A549 (cell line): ENCODE measurements at regions of chr3 and their contacts with region 1.

Region 1: DNA sequence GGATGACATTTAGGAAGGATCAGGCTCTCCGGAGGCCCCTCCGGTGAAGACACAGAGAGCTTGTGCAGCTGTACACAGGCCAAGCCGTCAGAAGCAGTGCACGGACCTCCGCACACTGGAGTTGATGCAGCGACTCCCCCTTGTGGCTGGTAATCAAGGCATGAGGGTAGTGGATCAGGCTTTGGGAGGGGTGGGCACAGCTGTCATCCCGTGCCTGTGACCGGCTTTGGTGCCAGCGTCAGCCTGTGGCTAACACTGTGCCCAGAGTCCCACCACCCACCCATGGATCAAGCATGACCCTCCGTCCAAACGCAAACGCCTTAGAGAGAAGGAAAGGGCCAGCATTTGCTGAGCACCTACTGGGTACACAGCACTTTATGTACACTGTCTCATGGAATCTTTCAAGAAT is 8.2 kb upstream of the GRIP2 start:
- DNase-seq: peak; percentile 67 to 76
- ATAC-seq: peak; percentile 86 to 96
- H3K4me3 ChIP-seq: no peak overlapping the region
- H3K27ac ChIP-seq: peak overlapping the region in 1 of 2 experiments; percentile 28; a peak in 1 of 6 replicates
- H3K4me1 ChIP-seq: peaks cover 16% of the 10 kb centered on the region
- CTCF ChIP-seq: peak; percentile 78
- EP300 ChIP-seq: no peak
- POLR2A ChIP-seq: no peak
- RAD21 ChIP-seq: peak; percentile 73 to 82

Region 2: GRCh38 chr3:14532691-14533456 is 15.5 kb before region 1 on chr3:
- CTCF ChIA-PET with region 1: interaction called, 49 read pairs
- POLR2A ChIA-PET with region 1: no interaction called
- DNase-seq: no peak
- ATAC-seq: peak in 1 of 2 experiments; percentile 74; a peak in 3 of 6 replicates
- H3K4me3 ChIP-seq: no peak overlapping the region
- H3K27ac ChIP-seq: no peak overlapping the region
- H3K4me1 ChIP-seq: no peaks in the 10 kb centered on the region
- CTCF ChIP-seq: no peak
- EP300 ChIP-seq: no peak
- POLR2A ChIP-seq: no peak
- RAD21 ChIP-seq: no peak

Region 3: DNA sequence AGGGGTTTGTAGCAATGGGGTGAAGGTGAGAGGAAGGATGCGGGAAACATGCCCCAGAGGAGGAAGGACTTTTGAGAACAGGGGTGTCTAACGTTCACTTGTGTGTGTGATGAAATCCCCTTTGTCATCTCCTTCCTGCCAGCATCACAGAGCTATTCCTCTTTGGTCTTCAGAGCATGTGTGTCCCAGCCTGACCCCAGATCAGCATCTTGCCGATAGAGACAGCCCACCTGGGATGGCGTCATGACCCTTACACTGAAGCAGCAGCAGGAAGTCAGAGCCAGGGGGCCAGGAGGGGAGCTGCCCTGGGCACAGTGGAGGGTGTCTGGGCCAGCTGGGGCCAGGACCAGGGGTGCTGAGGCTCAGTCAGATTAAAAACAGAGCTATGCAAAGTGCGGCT is 21.8 kb after region 1 on chr3:
- CTCF ChIA-PET with region 1: interaction called, 13 read pairs
- POLR2A ChIA-PET with region 1: no interaction called
- DNase-seq: no peak
- ATAC-seq: no peak
- H3K4me3 ChIP-seq: no peak overlapping the region
- H3K27ac ChIP-seq: no peak overlapping the region
- H3K4me1 ChIP-seq: peaks cover 15% of the 10 kb centered on the region
- CTCF ChIP-seq: no peak
- EP300 ChIP-seq: no peak
- POLR2A ChIP-seq: no peak
- RAD21 ChIP-seq: no peak

Region 4: GRCh38 chr3:14672588-14672987 is 124.3 kb after region 1 on chr3:
- CTCF ChIA-PET with region 1: no interaction called
- POLR2A ChIA-PET with region 1: no interaction called
- DNase-seq: no peak
- ATAC-seq: no peak
- H3K4me3 ChIP-seq: no peak overlapping the region
- H3K27ac ChIP-seq: no peak overlapping the region
- H3K4me1 ChIP-seq: no peaks in the 10 kb centered on the region
- CTCF ChIP-seq: no peak
- EP300 ChIP-seq: no peak
- POLR2A ChIP-seq: no peak
- RAD21 ChIP-seq: no peak

Region 5: DNA sequence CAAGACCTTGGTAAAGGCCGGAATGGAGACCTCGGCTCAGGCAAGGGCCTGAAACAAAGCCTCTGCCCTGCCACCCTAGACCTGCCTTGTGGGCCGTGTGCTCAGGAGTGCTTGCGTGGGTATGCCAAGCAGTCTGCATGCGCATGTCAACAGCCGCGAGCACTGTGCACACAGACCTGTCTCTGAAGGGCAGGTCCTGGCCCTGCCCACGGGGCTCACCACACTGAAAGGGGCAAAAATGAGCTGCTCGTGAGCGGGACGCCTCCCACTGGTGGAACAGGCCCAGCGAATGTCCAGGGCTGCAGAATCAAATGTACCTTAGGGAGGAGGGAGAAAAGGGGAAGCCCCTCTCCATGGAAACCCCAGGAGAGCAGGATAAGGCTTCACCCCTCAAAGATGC is 226.1 kb after region 1 on chr3:
- CTCF ChIA-PET with region 1: no interaction called
- POLR2A ChIA-PET with region 1: no interaction called
- DNase-seq: no peak
- ATAC-seq: no peak; a peak in 1 of 6 replicates
- H3K4me3 ChIP-seq: no peak overlapping the region
- H3K27ac ChIP-seq: no peak overlapping the region
- H3K4me1 ChIP-seq: no peaks in the 10 kb centered on the region
- CTCF ChIP-seq: no peak
- EP300 ChIP-seq: no peak
- POLR2A ChIP-seq: no peak
- RAD21 ChIP-seq: no peak

Region 6: GRCh38 chr3:14822670-14823390 is 274.5 kb after region 1 on chr3:
- CTCF ChIA-PET with region 1: no interaction called
- POLR2A ChIA-PET with region 1: no interaction called
- DNase-seq: no peak
- ATAC-seq: peak in 1 of 2 experiments; percentile 31; a peak in 2 of 6 replicates
- H3K4me3 ChIP-seq: no peak overlapping the region
- H3K27ac ChIP-seq: no peak overlapping the region
- H3K4me1 ChIP-seq: no peaks in the 10 kb centered on the region
- CTCF ChIP-seq: no peak
- EP300 ChIP-seq: no peak
- POLR2A ChIP-seq: no peak
- RAD21 ChIP-seq: no peak